BJ (cell line): ENCODE measurements at regions of chr4 and their contacts with region 1.

Region 1: GRCh38 chr4:84511703-84512102 is 12.6 kb upstream of the NKX6-1 start:
- DNase-seq: no peak
- H3K4me3 ChIP-seq: no peak overlapping the region
- H3K27me3 ChIP-seq: no peaks in the 10 kb centered on the region
- CTCF ChIP-seq: no peak

Region 2: DNA sequence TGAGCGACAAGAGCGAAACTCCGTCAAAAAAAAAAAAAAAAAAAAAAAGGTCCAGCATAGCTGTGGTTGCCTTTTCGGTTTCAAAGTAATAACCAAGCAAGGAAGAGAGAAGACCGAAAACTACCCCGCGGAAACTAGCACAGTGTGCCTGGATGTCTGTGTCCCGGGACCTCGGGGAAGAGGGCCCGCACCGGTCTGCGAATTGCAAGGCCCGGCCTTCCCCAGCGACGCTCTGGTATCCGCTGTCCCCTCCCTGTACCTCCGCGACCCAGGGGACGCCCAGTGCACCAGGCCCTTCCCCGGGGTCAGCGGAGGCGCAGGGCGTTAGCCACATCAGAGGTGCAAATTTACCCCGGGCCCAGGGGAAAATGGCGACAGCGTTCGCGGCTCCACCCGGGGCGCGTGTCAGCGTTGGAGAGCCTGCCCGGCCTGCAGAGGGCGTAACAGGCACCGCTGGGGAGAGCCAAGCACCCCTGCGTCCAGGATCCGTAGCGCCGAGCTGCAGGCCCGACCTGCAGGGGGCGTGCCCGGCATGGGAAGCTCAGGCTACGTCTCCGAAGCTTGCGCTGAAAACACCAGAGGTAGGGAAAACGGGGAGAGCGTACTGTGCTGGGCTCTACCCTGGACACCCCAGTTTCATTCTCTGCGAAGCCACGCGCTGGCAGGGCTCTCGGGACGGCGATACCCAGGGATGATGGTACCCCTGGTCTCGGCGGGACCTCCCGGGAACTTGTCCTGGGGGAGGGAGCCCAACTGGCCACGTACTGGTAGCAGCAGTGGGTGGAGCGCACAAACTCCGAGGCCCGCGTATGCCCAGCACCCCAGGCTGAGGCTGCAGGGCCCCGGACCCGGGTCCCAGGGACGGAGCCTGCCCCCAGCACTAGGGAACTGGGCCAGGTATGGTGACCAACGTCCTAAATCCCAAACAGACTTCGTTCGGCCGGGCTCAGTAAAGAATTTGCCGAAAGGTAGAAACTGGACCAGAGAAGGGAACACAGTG is 28.8 kb before region 1 on chr4:
- CTCF ChIA-PET with region 1: no interaction called
- POLR2A ChIA-PET with region 1: no interaction called
- DNase-seq: no peak
- H3K4me3 ChIP-seq: no peak overlapping the region
- H3K27me3 ChIP-seq: peaks cover 40% of the 10 kb centered on the region
- CTCF ChIP-seq: peak; percentile 57

Region 3: GRCh38 chr4:84493092-84493850 is 18.4 kb before region 1 on chr4:
- CTCF ChIA-PET with region 1: no interaction called
- POLR2A ChIA-PET with region 1: no interaction called
- DNase-seq: no peak
- H3K4me3 ChIP-seq: no peak overlapping the region
- H3K27me3 ChIP-seq: peaks cover 36% of the 10 kb centered on the region
- CTCF ChIP-seq: peak; percentile 20; the same call in 1 of the 2 replicates

Region 4: DNA sequence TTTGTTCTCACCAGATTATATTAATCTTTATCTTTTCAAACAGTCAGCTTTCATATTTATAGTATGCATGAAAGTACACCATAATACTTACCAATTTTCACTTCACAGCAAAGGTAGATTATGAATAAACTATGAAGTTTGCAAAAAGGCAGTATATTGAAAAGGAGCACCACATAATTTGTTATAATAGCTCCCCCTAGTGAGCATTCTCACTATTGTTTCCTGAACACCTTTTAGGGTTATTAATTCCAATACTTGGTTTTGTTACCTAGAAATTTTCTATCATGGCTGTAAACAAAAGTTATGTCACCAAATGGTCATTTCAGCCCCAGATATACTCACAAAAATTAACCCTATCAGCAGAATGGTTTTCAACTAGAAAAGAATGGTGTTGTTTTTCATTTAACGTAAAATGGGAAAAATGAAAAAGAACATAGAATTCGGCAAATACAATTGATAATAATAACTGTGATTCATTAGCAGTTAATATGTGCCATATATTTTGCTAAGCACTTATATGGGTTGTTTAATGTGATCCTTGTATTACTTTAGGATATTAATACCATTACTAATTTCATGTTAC is 17.6 kb after region 1 on chr4:
- CTCF ChIA-PET with region 1: interaction called, 18 read pairs
- POLR2A ChIA-PET with region 1: no interaction called
- DNase-seq: no peak
- H3K4me3 ChIP-seq: no peak overlapping the region
- H3K27me3 ChIP-seq: peaks cover 1% of the 10 kb centered on the region; the same call in 1 of the 2 replicates
- CTCF ChIP-seq: peak; percentile 63

Region 5: DNA sequence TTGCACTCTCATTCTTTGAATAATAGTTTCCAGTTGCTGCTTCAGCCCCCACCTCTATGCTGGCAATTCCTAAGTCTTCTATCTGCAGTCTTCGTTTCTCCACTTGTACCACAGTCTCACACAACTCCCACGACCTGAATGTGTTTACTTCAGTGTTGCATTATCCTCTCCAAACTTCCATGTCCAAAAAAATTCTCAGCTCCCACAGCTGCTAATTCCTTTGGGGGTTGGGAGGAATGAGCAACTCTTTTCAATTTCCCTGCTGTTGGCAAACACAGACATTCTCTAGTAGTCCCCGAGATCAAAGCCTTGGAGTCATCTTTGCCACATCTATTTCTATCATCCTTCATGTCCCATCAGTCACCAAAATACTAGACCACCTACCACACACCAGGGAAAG is 56.8 kb after region 1 on chr4:
- CTCF ChIA-PET with region 1: no interaction called
- POLR2A ChIA-PET with region 1: no interaction called
- DNase-seq: no peak
- H3K4me3 ChIP-seq: no peak overlapping the region
- H3K27me3 ChIP-seq: no peaks in the 10 kb centered on the region
- CTCF ChIP-seq: no peak

Region 6: DNA sequence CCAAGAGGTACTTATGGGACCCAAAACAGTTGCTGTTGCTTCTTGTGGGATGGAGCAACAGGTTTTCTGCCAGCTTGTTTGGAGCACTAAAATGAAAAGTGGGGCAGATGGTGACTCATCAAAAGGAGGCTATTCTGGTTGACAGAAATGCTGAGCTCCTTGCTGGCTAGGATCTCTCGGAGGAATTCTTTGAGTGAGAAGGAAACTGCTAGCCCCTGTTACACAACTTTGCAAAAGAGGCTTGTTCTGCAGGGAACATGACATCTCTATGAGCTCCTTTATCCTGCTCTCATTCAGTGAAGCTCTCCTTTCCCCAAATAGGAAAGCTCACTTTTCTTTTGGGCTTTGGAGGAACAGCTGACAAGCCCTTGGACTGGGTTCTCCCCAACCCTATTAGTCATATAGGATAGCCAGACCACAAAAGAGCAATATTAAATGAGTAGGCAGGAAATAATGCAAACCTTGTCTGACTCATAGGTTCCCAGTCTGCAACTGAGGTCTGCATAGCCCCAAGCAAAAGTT is 179.5 kb after region 1 on chr4:
- CTCF ChIA-PET with region 1: no interaction called
- POLR2A ChIA-PET with region 1: no interaction called
- DNase-seq: peak; percentile 59
- H3K4me3 ChIP-seq: no peak overlapping the region
- H3K27me3 ChIP-seq: no peaks in the 10 kb centered on the region
- CTCF ChIP-seq: no peak